HEK293 (cell line): ENCODE measurements at regions of chr9 and their contacts with region 1.

Region 1: DNA sequence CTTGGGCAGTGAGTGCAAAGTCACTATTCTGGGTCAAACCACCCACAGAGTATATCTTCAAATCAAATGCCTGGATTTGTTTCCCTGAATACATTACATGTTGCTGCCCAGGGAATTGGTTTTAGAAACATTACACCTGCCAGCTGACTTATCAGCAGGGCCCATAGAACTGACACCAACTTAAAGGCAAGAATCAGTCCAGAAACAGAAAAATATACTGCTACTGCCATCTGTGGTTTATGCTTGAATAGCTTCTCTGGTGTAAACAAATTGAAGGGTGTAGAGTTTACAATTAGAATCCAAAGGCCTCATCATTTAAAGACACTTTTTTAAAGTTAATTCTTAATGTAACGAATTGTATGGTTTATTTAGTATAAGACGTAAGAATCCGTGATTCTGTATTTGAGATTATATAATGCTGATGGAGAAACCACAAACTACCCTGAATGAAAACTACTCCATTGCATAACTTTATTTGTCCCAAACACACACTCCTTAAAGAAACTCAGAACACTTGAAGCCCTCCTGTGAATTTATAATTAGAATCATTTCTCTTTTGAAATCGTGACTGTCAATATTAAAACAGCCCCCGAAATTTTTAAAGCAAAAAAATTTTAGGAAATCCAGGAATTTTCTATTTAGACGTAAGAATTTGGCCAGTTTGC is 6.2 kb downstream of the NR6A1 start:
- H3K4me3 ChIP-seq: no peak overlapping the region
- H3K27ac ChIP-seq: no peak overlapping the region
- H3K4me1 ChIP-seq: peaks cover 27% of the 10 kb centered on the region
- CTCF ChIP-seq: no peak

Region 2: DNA sequence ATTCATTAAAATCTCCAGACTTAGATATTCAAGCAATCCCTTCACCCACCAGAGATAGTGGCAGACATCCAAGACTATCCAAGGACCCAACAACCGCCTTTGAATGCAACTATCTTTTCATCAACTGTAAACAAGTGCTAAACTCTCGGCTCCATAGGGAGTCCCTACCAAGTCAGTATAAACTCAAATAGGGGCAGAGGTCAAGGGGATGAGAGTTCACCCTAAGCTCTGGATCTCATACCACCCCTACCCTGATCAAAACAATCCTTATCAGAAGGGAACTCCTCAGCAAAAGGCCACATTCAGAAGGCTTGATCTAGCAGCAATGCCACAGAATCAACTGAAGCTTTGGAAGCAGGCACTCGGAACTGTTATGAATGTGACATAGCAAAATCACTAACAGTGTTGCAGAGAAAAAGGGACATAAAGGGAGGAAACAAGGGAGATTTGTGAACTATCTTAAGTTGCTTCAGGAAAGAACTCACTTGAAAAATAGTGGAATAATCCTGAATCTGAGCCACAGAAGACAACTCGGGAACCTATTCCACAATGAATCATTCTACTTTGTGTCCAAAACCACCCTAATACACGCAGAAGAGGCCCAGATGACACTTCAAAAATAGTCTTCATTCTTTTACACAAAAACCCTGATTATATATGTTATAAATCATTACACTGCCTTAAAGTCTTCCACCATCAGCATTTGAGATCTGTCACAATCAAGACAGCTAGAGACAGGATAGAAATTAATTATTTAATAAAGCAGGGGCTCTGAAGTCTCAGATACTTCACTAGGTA is 43.6 kb before region 1 on chr9:
- CTCF ChIA-PET with region 1: interaction called, 36 read pairs
- POLR2A ChIA-PET with region 1: no interaction called
- H3K4me3 ChIP-seq: no peak overlapping the region
- H3K27ac ChIP-seq: peak overlapping the region; percentile 29
- H3K4me1 ChIP-seq: peaks cover 19% of the 10 kb centered on the region
- CTCF ChIP-seq: no peak

Region 3: DNA sequence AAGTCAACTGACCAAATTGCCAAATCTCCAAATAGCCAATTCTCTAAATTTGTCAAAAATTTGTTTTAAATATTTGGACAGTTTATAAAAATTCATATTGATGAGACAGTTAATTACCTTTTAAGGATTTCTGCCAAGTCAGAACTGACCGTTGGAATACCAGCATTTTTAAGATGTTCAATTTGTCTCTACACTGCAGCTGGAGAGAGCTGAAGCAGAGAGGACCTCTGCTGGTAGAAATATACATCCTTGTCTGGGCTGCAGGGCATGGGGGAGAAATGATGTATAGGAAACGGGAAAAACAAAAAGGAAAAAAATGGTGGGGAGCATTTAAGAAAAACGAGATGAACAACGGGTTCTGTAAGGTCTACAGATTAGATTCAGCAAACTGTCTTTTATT is 10.6 kb before region 1 on chr9:
- CTCF ChIA-PET with region 1: interaction called, 18 read pairs
- POLR2A ChIA-PET with region 1: interaction called, 6 read pairs
- H3K4me3 ChIP-seq: no peak overlapping the region
- H3K27ac ChIP-seq: no peak overlapping the region
- H3K4me1 ChIP-seq: peaks cover 34% of the 10 kb centered on the region
- CTCF ChIP-seq: no peak

Region 4: DNA sequence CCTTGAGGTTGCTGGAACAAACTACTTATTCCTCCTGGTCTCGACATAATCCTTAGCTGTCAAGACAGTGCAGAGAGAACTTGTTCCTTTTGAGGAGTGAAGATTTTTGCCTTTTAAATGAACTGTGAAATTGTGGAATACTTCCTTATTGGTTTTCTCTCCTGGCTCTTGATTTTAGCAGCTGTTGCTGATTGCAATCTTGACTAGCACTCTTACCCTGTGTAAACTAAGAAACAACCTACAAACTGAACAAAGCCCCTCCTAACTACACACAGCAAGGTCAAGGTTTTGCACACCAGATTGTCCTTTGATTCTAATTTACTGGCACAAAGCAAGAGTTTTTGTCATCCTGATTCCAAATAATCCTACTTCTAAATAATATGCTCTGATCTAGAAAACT is 260.0 kb after region 1 on chr9:
- CTCF ChIA-PET with region 1: no interaction called
- POLR2A ChIA-PET with region 1: no interaction called
- H3K4me3 ChIP-seq: no peak overlapping the region
- H3K27ac ChIP-seq: no peak overlapping the region
- H3K4me1 ChIP-seq: no peaks in the 10 kb centered on the region
- CTCF ChIP-seq: no peak